ENCODE measurements at regions of chr1 and their contacts with region 1.

Region 1: GRCh38 chr1:31564134-31564989 is 12.0 kb upstream of the TINAGL1 start:
- DNase-seq: no peak
- ATAC-seq: peak; percentile 39 to 72 (median 58)
- H3K4me3 ChIP-seq: no peak overlapping the region
- H3K27ac ChIP-seq: peak overlapping the region in 2 of 10 donors; percentile 31 to 48
- H3K4me1 ChIP-seq: peaks cover 0 to 24% (median 8%) of the 10 kb centered on the region in 9 donors
- H3K27me3 ChIP-seq: peaks cover 0 to 14% (median 0%) of the 10 kb centered on the region in 7 donors
- CTCF ChIP-seq: peak; percentile 77 to 94 (median 87)

Region 2: DNA sequence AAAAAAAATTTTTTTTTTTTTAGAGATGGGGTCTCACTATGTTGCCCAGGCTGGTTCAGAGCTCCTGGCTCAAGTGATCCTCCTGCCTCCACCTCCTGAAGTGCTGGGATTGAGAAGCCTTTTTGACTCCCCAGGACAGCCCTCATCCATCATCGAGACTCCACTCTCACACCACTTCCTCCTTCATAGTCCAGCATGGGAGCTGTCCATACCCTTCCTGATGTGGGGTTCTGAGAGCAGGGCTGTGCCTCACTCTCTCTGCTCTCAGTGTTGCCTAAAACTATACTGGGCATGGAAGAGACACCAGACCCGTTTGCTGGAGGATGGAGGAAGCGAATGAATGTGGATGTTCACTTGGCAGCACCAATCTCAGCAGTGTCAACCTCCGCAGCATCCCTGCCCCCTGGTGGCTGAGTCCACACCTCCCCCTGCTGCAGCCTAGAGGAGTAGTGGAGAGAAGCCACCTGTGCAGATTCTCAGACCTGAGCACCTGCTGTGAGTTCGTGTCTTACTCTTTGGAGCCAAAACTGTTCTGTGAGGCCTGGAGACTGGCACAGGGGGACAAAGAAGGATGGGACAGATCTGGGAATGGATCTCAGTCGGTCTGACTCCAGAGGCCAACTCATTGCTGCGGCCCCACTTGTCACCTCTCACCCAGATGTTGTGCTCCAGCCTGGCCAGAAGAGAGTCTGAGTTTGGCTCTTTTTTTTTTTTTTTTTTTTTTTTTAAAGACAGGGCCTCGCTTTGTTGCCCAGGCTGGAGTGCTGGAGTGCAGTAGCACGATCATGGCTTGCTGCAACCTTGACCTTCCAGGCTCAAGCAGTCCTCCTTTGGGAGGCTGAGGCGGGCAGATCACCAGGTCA is 29.6 kb after region 1 on chr1:
- intact Hi-C with region 1: loop called (anchors 1 to 5 kb)
- DNase-seq: peak; percentile 82 to 87
- ATAC-seq: peak; percentile 74 to 93 (median 86)
- H3K4me3 ChIP-seq: no peak overlapping the region
- H3K27ac ChIP-seq: no peak overlapping the region
- H3K4me1 ChIP-seq: peaks cover under 1 to 62% (median 15%) of the 10 kb centered on the region in 9 donors
- H3K27me3 ChIP-seq: peaks cover 0 to 6% (median 0%) of the 10 kb centered on the region in 7 donors
- CTCF ChIP-seq: peak; percentile 81 to 93 (median 91)

Region 3: GRCh38 chr1:31617917-31618660 is 53.7 kb after region 1 on chr1:
- intact Hi-C with region 1: loop called in 2 of 10 experiments (anchors 1 to 5 kb)
- DNase-seq: peak in 1 of 2 donors; percentile 44
- ATAC-seq: peak; percentile 42 to 81 (median 60)
- H3K4me3 ChIP-seq: peak overlapping the region; percentile 36 to 73 (median 62)
- H3K27ac ChIP-seq: peak overlapping the region in 4 of 10 donors; percentile 9 to 69 (median 34)
- H3K4me1 ChIP-seq: peaks cover 6 to 48% (median 30%) of the 10 kb centered on the region in 9 donors
- H3K27me3 ChIP-seq: peaks cover 0 to 31% (median 10%) of the 10 kb centered on the region in 7 donors
- CTCF ChIP-seq: peak; percentile 58 to 92 (median 89)

Region 4: DNA sequence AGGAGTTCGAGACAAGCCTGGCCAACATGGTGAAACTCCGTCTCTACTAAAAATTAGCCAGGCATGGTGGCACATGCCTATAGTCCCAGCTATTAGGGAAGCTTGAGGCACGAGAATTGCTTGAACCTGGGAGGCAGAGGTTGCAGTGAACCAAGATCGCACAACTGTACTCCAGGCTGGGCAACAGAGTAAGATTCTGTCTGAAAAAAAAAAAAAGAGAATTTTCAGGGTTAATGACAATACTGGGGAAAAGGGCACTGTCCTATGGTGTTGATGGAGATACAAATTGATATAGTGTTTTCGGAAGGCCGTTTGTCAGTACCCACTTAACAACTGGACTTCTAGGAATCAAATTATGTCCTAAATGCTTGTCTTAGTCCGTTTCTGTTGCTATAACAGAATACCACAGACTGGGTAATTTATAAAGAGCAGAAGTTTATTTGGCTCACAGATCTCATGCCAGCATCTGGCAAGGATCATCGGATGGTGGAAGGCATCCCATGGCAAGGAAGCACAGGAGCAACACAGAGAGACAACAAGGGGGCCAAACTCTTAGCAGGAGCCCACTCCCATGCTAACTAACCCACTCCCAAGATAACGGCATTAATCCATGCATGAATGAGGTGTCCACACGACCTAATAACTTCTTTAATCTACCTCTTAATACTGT is 1016.1 kb after region 1 on chr1:
- intact Hi-C with region 1: no loop called
- DNase-seq: no peak
- ATAC-seq: no peak
- H3K4me3 ChIP-seq: no peak overlapping the region
- H3K27ac ChIP-seq: no peak overlapping the region
- H3K4me1 ChIP-seq: no peaks in the 10 kb centered on the region
- H3K27me3 ChIP-seq: no peaks in the 10 kb centered on the region
- CTCF ChIP-seq: no peak

Measured in heart right ventricle (tissue), 16 donors.